Left colon (tissue), 2 donors: ENCODE measurements at regions of chr1 and their contacts with region 1.

Region 1: DNA sequence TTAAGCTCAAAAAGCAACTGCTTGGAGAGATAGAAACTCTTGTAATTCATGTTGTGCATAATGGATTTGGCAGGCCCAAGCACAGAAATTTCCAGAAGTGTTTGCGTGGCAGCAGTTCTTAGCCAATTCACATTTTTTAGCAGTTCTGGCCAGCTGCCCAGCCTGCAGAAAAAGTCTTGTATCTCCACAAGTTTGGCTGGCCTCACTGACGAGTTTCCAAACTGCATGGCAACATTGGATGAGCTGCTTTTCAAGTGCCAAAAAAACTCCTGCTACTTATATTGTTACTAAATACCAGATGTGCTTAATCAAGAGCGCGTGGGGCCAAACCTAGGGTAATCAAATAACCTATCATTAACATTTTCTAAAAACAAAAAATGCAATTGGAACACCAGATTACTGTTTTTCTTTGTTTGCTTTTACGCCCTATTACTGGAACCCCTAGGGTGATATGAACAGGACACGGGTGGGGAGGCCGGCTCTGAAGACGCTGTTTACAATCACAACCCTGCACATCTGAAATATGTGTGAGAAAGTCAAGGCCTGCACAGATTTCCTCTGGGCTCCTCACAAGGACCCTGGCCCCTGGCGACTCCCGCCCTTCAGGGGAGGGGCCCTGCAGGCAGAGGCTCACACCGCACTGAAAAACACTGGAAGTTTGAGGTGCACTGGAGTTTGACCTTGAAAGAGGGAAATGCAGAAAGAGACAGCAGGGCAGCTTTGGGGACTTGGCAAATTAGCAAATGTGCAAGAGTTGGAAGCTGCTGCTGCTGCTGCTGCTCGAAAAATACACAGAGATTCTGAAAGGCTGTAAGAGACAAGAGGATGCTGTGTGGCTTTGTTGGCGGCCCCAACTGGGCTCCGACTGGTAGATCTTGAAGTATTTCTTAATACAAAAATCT is 55.2 kb upstream of the TARBP1 start:
- DNase-seq: peak; percentile 75 to 87
- ATAC-seq: no peak

Region 2: GRCh38 chr1:234579967-234580366 is 45.7 kb after region 1 on chr1:
- intact Hi-C with region 1: loop called in 1 of 2 experiments (anchors 5 kb)
- DNase-seq: no peak
- ATAC-seq: peak; percentile 42

Region 3: DNA sequence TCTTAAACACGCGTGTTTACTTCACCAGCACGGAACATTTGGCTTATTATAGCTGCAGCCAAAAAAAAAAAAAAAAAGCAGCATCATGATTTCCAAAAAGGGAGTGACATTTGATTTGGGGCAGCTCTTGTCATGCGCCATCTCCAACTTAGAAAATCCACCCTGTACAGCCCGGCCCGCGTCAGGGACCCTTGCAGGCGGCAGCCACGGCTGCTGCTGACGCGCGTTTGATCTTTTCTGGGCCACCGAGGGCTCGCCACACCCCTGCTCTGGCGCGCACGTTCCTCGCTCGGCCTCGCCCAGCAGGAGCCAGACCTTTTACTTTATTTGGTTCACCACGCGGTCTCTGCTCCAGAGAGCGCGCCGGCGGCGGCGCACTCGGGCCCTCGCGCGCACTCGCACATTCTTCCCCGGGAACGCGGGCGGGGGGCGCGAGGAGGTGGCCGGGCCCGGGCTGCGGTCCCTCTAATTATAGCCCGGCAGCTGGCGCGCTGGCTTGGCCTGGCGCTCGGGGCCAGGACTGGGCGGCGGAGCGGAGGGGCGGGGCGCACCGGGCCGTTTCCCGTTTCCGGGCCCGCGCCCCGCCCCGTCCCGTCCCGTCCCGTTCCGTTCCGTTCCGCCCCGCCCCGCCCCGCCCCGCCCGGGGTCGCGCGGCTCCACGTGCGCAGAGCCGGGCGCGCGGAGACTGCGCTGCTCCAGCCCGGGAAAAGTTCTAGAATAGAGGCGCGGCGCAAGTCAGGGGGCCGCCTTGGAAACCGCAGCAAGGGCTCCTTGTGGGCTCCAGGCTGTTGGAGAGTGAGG is 65.6 kb after region 1 on chr1:
- intact Hi-C with region 1: loop called in 1 of 2 experiments (anchors 5 kb)
- DNase-seq: peak; percentile 88 to 91
- ATAC-seq: peak; percentile 74